PC-9 (cell line): ENCODE measurements at regions of chr22 and their contacts with region 1.

Region 1: DNA sequence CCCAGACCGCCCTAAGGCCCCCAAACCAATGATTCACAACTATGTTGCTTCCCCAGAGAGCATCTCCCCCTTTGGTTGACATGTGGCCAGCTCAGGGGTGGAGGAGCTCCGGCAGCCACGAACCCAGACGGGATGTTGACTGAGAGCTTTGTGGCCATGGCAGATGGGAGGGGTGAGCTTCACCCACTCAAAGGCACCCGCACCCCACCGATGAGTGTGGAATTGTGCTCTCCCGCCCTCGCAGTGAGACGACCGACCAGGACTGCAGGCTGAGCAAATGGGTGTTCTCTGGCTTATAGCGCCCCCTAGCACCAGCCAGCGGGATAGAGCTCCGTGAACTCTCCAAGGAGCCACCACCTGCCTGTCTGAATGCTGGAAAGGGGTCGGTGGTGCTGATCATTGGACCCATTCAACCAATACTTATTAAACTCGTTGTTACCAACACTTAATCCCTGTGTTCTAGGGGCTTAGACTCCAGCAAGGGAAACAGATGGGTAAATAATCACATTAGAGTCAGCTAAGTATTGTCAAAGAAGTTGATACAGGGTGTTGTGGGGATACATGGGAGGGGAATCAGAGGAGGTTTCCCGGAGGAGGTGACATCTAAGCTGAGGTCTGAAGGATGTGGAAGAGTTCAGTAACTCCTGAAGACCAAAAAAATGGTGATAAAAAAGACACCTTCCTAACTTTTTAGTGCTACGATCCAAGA is 4.5 kb upstream of the TIMP3 start:
- DNase-seq: peak in 1 of 2 experiments; percentile 61
- H3K4me3 ChIP-seq: no peak overlapping the region
- H3K27ac ChIP-seq: no peak overlapping the region
- H3K4me1 ChIP-seq: peaks cover 17% of the 10 kb centered on the region
- H3K27me3 ChIP-seq: no peaks in the 10 kb centered on the region
- CTCF ChIP-seq: peak; percentile 97

Region 2: GRCh38 chr22:30905696-30906341 is 1891.2 kb before region 1 on chr22:
- CTCF ChIA-PET with region 1: no interaction called
- POLR2A ChIA-PET with region 1: no interaction called
- intact Hi-C with region 1: no loop called
- DNase-seq: no peak
- H3K4me3 ChIP-seq: no peak overlapping the region
- H3K27ac ChIP-seq: no peak overlapping the region
- H3K4me1 ChIP-seq: no peaks in the 10 kb centered on the region
- H3K27me3 ChIP-seq: no peaks in the 10 kb centered on the region
- CTCF ChIP-seq: no peak

Region 3: GRCh38 chr22:32676196-32676595 is 120.8 kb before region 1 on chr22:
- CTCF ChIA-PET with region 1: interaction called, 6 read pairs
- POLR2A ChIA-PET with region 1: interaction called, 3 read pairs
- intact Hi-C with region 1: loop called (anchors 1 kb)
- DNase-seq: no peak
- H3K4me3 ChIP-seq: no peak overlapping the region
- H3K27ac ChIP-seq: peak overlapping the region; percentile 60
- H3K4me1 ChIP-seq: peaks cover 56% of the 10 kb centered on the region
- H3K27me3 ChIP-seq: no peaks in the 10 kb centered on the region
- CTCF ChIP-seq: no peak

Region 4: GRCh38 chr22:32764330-32765131 is 32.5 kb before region 1 on chr22:
- CTCF ChIA-PET with region 1: interaction called, 10 read pairs
- POLR2A ChIA-PET with region 1: interaction called, 3 read pairs
- intact Hi-C with region 1: loop called (anchors 2 kb)
- DNase-seq: peak in 1 of 2 experiments; percentile 79
- H3K4me3 ChIP-seq: no peak overlapping the region
- H3K27ac ChIP-seq: peak overlapping the region; percentile 52
- H3K4me1 ChIP-seq: peaks cover 53% of the 10 kb centered on the region
- H3K27me3 ChIP-seq: no peaks in the 10 kb centered on the region
- CTCF ChIP-seq: no peak

Region 5: DNA sequence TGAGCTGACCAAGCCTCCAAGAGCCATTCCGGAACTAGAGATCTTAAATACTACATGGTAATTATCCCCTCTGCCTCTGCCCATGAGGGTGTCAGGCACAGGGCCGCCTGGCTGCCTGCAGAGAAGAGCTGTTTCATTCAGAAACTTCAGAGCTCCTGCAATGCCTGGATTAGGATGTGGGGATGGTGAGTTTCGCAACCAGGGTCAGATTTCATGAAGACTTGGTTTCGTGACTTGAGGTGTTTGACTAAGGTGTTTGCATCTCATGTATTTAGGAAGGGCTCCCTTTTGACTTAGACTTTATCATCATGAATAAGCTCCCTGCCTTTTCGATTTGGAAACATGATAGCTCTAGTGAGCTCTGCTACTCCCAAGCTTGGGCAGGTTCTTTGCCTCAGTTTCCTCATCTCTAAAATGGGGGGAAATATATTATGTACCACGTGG is 13.6 kb after region 1 on chr22:
- CTCF ChIA-PET with region 1: interaction called, 12 read pairs
- POLR2A ChIA-PET with region 1: interaction called, 3 read pairs
- intact Hi-C with region 1: no loop called
- DNase-seq: peak; percentile 71 to 98
- H3K4me3 ChIP-seq: 0 out of 2 replicates have a peak overlapping the region, but pooled peaks have one; percentile 42
- H3K27ac ChIP-seq: peak overlapping the region; percentile 88
- H3K4me1 ChIP-seq: peaks cover 75% of the 10 kb centered on the region
- H3K27me3 ChIP-seq: no peaks in the 10 kb centered on the region
- CTCF ChIP-seq: no peak

Region 6: DNA sequence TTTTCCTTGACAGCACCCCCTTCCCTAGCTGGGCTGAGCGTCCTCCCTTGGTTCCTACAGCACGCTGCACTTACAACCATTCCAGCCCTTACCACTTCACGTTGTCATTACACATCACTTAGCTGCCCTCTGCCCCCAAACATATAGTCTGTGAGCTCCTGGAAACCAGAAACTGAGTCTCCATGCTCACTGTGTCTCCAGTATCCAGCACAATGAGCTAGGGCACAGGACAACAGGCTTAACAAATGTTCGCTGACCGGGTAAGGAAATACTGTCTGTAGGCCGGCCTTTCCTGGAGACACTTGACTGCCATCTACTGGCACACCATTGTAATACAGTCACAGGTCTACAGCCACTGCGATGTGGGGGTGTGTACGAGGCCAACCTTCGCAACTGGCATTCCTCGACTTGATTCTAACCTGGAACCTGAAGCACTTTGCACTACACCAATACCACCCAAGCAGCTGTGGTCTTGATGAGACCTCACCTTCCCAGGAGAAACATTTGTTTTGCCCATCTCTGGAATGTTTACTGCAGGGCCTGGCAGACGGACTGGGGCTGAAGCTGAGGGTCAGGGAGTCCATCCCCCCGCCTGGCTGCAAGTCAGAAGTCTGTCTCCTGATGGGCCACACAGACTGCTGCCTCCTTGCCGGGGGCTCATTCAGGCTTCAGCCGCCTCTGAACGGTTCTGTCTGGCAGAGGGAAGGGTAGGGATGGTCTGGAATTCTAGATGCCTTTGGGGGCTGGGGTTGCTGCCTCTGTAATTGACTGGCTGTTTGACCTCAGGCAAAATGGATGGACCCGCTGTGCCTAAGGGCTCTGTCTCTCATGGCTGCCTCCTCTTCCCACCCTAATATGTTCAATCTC is 189.1 kb after region 1 on chr22:
- CTCF ChIA-PET with region 1: no interaction called
- POLR2A ChIA-PET with region 1: no interaction called
- intact Hi-C with region 1: loop called (anchors 5 kb)
- DNase-seq: peak; percentile 65 to 74
- H3K4me3 ChIP-seq: no peak overlapping the region
- H3K27ac ChIP-seq: no peak overlapping the region
- H3K4me1 ChIP-seq: peaks cover 27% of the 10 kb centered on the region
- H3K27me3 ChIP-seq: no peaks in the 10 kb centered on the region
- CTCF ChIP-seq: peak; percentile 93